H1 (cell line): ENCODE measurements at regions of chr2 and their contacts with region 1.

Region 1: GRCh38 chr2:202072226-202072625 is 829 bp upstream of the KIAA2012 start:
- DNase-seq: no peak
- H3K4me3 ChIP-seq: no peak overlapping the region
- H3K27ac ChIP-seq: no peak overlapping the region
- H3K4me1 ChIP-seq: peaks cover 0 to 9% (median 1%) of the 10 kb centered on the region in 4 experiments; a peak in 4 of 7 replicates
- H3K27me3 ChIP-seq: no peaks in the 10 kb centered on the region
- CTCF ChIP-seq: peak; percentile 59 to 74 (median 65)
- EP300 ChIP-seq: no peak
- POLR2A ChIP-seq: no peak
- RAD21 ChIP-seq: peak; percentile 48 to 64

Region 2: DNA sequence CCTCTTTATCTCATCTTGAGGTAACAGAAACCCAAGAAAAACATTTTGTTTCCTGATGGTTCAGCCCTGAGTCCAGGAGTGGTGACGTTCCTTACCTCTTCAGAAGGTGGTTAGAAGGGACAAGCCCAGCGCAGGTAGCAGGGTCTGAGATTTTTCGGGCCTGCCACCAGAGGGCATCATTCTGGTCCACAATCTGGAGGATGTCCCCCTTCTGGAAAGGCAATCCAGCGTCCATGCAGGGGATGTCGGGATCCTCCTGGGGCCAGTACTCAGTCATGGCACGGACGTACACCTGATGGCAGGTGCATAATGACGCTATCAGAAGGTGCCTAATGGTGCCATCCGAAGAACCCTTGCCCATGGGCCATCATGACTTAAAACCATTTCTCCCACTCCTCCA is 391.5 kb before region 1 on chr2:
- CTCF ChIA-PET with region 1: no interaction called
- POLR2A ChIA-PET with region 1: no interaction called
- DNase-seq: peak; percentile 25 to 85
- H3K4me3 ChIP-seq: no peak overlapping the region
- H3K27ac ChIP-seq: no peak overlapping the region
- H3K4me1 ChIP-seq: peaks cover 0 to 3% (median under 1%) of the 10 kb centered on the region in 4 experiments; a peak in 2 of 7 replicates
- H3K27me3 ChIP-seq: no peaks in the 10 kb centered on the region
- CTCF ChIP-seq: peak; percentile 91 to 99 (median 97)
- EP300 ChIP-seq: no peak
- POLR2A ChIP-seq: no peak
- RAD21 ChIP-seq: peak; percentile 63 to 72

Region 3: DNA sequence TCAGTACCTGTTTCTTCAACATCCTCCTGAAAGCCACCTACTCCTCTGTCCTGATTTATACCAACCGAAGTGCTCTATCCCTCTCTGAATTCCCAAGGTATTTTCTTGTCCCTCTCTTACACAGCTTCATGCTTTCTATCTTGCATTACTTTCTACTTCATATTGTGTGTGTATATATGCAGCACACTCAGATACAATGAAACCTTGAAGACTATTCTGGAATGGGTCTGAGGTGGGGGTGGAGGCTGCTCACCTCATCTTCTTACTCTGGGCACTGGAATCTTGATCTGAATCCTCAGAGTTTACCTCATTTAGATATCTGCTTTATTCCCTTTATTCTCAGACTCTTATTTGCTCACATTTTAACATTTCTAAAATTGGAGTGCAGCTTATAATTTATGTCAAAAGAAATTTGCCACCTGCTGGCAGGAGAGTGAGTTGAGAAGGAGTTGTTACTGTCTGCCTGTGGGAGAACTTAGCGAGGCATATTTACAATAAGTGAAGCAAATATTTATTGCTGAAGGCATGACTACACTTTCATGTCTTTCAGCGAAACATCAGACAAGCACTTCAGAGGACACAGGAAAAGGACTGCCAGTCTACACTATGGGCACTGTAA is 15.7 kb before region 1 on chr2:
- CTCF ChIA-PET with region 1: interaction called, 10 read pairs
- POLR2A ChIA-PET with region 1: interaction called, 3 read pairs
- DNase-seq: no peak
- H3K4me3 ChIP-seq: no peak overlapping the region
- H3K27ac ChIP-seq: no peak overlapping the region
- H3K4me1 ChIP-seq: peaks cover 2 to 9% (median 6%) of the 10 kb centered on the region in 4 experiments; a peak in 6 of 7 replicates
- H3K27me3 ChIP-seq: no peaks in the 10 kb centered on the region
- CTCF ChIP-seq: no peak
- EP300 ChIP-seq: no peak
- POLR2A ChIP-seq: no peak
- RAD21 ChIP-seq: no peak

Region 4: DNA sequence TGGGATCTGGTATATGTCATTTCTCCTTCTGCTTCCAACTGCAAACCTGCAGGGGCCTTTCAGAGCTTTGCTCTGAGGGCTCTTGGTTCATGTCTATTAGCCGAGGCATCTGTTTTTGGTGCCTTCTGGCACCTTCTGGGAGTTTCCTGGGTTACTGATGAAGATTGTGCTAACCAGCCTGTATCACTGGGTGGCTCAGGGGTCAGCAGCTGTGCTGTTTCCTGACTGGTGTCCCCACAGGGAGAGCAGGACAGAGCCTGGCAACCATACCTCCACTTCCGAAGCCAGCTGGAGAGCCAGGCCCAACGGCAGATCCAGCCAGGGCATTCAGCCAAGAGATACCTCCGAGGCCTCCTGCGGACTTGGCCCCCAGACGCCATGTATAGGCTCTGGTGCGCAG is 18.3 kb after region 1 on chr2:
- CTCF ChIA-PET with region 1: interaction called, 15 read pairs
- POLR2A ChIA-PET with region 1: no interaction called
- DNase-seq: no peak
- H3K4me3 ChIP-seq: no peak overlapping the region
- H3K27ac ChIP-seq: no peak overlapping the region
- H3K4me1 ChIP-seq: no peaks in the 10 kb centered on the region
- H3K27me3 ChIP-seq: no peaks in the 10 kb centered on the region
- CTCF ChIP-seq: no peak
- EP300 ChIP-seq: no peak
- POLR2A ChIP-seq: no peak
- RAD21 ChIP-seq: no peak

Region 5: DNA sequence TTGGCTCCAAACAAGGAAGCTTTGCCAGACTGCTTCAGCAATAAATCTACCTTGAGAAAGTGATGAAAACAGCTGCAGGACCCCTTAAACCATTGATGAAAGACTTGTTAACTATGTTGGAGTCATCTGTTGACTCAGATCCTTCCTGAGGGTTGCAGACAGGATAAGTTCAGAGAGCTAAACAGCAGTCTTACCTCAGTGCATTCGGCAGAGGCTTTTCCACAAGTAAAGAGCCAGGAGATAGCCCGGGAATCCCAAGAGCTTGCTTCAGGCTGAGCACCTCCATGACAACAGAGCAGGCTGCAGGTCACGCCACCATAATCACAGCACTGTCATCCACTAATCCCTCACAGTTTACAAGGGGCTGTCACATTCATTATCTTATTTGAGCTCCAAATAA is 24.5 kb after region 1 on chr2:
- CTCF ChIA-PET with region 1: interaction called, 28 read pairs
- POLR2A ChIA-PET with region 1: no interaction called
- DNase-seq: no peak
- H3K4me3 ChIP-seq: no peak overlapping the region
- H3K27ac ChIP-seq: no peak overlapping the region
- H3K4me1 ChIP-seq: peaks cover 0 to 9% (median 6%) of the 10 kb centered on the region in 4 experiments; a peak in 3 of 7 replicates
- H3K27me3 ChIP-seq: no peaks in the 10 kb centered on the region
- CTCF ChIP-seq: no peak
- EP300 ChIP-seq: no peak
- POLR2A ChIP-seq: no peak
- RAD21 ChIP-seq: no peak

Region 6: GRCh38 chr2:202104278-202104870 is 32.1 kb after region 1 on chr2:
- CTCF ChIA-PET with region 1: interaction called, 28 read pairs
- POLR2A ChIA-PET with region 1: no interaction called
- DNase-seq: peak; percentile 54 to 95
- H3K4me3 ChIP-seq: no peak overlapping the region
- H3K27ac ChIP-seq: no peak overlapping the region
- H3K4me1 ChIP-seq: peaks cover 0 to 9% (median 6%) of the 10 kb centered on the region in 4 experiments; a peak in 3 of 7 replicates
- H3K27me3 ChIP-seq: no peaks in the 10 kb centered on the region
- CTCF ChIP-seq: peak; percentile 89 to 97 (median 94)
- EP300 ChIP-seq: no peak
- POLR2A ChIP-seq: no peak
- RAD21 ChIP-seq: peak; percentile 81 to 86

Region 7: GRCh38 chr2:202172439-202173211 is 100.4 kb after region 1 on chr2:
- CTCF ChIA-PET with region 1: interaction called, 11 read pairs
- POLR2A ChIA-PET with region 1: no interaction called
- DNase-seq: no peak
- H3K4me3 ChIP-seq: no peak overlapping the region
- H3K27ac ChIP-seq: no peak overlapping the region
- H3K4me1 ChIP-seq: peaks cover 0 to 7% (median 1%) of the 10 kb centered on the region in 4 experiments; a peak in 2 of 7 replicates
- H3K27me3 ChIP-seq: peaks cover 2 to 19% (median 14%) of the 10 kb centered on the region in 4 experiments; a peak in 5 of 7 replicates
- CTCF ChIP-seq: no peak
- EP300 ChIP-seq: no peak
- POLR2A ChIP-seq: no peak
- RAD21 ChIP-seq: no peak